ENCODE measurements at regions of chr1 and their contacts with region 1.

Region 1: DNA sequence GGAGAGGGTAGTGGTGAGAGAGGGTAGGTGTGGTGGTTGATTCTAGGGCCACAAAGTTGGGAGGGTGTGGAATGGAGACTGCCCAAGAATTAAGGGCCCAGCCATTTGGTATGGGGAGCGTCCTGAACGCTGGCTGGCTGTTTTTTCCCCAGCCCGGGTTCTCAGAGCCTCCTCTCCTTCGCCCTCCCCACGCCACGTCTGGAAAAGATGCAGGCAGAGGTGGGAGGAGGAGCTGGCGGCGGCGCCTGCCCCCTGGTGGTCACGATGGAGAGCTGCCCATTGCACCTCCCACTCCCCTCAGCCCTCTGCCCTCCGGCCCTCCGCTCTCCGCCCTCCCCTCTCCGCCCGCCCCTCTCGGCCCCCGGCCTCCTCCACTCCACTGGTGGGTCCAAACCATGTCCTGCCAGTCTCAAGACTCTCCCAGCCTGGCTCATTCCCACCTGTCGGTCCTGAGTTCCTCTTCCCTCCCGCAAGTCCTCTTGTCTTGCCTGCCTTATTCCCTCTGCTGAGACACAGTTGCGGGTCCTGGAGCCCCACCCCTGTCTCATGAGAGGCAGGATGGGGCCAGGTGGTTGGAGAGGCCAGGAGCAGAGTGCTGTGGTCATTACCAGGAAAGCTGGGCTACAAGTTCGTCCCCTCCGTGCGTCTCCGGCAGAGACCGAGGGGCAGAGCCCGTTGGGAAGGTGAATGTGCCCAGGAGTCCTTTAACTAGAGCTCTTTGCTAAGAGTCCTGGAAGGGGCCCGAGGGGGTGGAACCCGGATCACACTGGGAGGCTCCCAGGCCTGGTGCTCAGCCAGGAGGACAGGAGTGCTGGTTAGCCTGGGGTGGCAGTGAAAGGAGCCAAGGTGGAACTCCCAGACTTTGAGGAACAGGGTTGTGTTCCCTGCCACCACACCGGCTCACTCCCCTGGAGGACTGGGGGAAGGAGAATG is 22.6 kb downstream of the ETNK2 start:
- DNase-seq: no peak
- H3K4me3 ChIP-seq: no peak overlapping the region
- H3K27me3 ChIP-seq: no peaks in the 10 kb centered on the region
- CTCF ChIP-seq: peak; percentile 91

Region 2: DNA sequence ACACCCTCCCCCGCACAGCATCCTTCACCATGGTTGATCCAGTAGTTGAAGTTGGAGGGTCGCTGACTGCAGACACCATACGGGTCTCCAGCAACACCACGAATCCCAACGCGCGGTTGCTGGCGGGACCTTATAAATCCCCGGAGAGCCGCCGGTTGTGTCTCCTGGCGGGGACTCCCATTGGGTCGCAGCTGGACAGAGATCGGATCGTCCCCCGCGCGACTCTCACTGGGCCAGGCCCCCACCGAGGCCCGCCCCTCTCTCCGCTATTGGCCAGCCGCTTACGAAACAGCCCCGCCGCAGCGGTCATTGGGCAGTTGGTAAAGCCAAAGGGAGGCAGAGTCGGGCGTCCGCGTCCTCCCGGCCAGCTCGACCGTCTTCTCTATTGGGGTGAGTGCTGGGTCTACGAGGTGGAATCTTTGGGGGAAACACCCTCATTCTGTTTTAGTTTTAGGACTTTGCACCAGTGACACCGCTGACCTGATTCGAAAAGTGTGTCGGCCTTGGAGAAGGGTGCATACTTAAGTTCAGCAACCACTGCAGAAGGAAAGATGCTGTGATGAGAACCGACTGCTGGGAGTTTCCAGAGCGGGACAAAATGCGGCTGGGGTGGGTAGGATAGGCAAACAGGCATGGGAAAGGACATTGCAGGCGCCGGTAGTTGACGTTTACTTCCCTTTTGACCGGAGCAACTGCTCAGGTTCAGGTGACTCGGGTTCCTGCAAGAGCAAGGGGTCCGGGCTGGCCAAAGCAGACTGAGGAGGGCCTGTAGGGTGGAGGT is 1267.6 kb before region 1 on chr1:
- CTCF ChIA-PET with region 1: no interaction called
- POLR2A ChIA-PET with region 1: no interaction called
- DNase-seq: peak; percentile 46
- H3K4me3 ChIP-seq: peak overlapping the region; percentile 69
- H3K27me3 ChIP-seq: no peaks in the 10 kb centered on the region
- CTCF ChIP-seq: no peak

Region 3: GRCh38 chr1:203861379-203862184 is 267.6 kb before region 1 on chr1 and contains the start of gene SNRPE:
- CTCF ChIA-PET with region 1: interaction called, 456 read pairs
- POLR2A ChIA-PET with region 1: interaction called, 3 read pairs
- DNase-seq: peak; percentile 88
- H3K4me3 ChIP-seq: peak within 1 kb of the TSS; percentile 64
- H3K27me3 ChIP-seq: no peaks in the 10 kb centered on the region
- CTCF ChIP-seq: peak; percentile 97
- polyA plus RNA-seq, gene SNRPE: 128 and 147 TPM in 2 replicates

Region 4: GRCh38 chr1:204080163-204080903 is 48.9 kb before region 1 on chr1:
- CTCF ChIA-PET with region 1: interaction called, 23 read pairs
- POLR2A ChIA-PET with region 1: no interaction called
- DNase-seq: no peak
- H3K4me3 ChIP-seq: no peak overlapping the region
- H3K27me3 ChIP-seq: no peaks in the 10 kb centered on the region
- CTCF ChIP-seq: no peak

Region 5: GRCh38 chr1:204114606-204115005 is 14.6 kb before region 1 on chr1:
- CTCF ChIA-PET with region 1: interaction called, 56 read pairs
- POLR2A ChIA-PET with region 1: interaction called, 3 read pairs
- DNase-seq: no peak
- H3K4me3 ChIP-seq: no peak overlapping the region
- H3K27me3 ChIP-seq: no peaks in the 10 kb centered on the region
- CTCF ChIP-seq: no peak

Region 6: DNA sequence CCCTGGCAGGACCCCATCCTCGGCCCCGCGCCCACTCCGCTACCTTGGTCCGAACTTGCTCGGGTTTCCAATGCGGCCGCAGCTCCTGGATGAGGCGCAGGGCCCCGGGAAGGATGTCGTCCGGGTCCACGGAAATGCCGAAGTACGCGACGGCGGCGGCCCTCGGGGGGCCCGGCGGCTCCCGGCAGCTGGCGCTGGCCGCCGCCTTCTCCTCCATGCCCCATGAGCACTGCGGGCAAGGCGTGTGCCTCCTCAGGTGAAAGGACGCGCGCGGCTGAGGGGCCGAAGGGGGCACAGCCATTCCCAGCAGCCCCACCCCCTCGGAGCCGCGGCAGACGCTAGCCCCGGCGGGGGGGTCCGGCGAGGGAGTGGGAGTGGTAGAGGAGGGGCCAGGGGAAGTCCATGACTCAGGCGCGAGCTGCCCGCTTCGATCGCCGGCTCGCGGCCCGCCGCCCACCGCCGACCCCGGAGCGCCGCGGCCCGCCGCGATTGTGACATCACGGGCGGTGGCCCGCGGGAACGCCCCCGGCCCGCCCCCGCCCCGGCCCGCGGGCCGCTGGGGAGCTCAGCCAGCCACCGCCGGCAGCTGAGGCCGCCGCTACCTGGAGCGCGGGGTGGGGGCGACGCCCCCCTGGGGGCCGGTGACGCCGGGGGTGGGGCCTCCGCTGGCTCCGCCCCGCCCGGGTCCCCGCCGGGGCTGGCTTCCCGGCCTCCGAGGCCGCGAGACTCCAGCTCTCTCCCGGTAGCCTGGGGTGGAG is 22.5 kb after region 1 on chr1 and contains the start of gene ETNK2:
- CTCF ChIA-PET with region 1: interaction called, 30 read pairs
- POLR2A ChIA-PET with region 1: no interaction called
- DNase-seq: no peak
- H3K4me3 ChIP-seq: peak within 1 kb of the TSS; percentile 73
- H3K27me3 ChIP-seq: no peaks in the 10 kb centered on the region; the same call in 1 of the 2 replicates
- CTCF ChIP-seq: no peak
- polyA plus RNA-seq, gene ETNK2: 27.2 and 30.7 TPM in 2 replicates

Region 7: GRCh38 chr1:204177133-204177532 is 47.9 kb after region 1 on chr1:
- CTCF ChIA-PET with region 1: no interaction called
- POLR2A ChIA-PET with region 1: no interaction called
- DNase-seq: no peak
- H3K4me3 ChIP-seq: no peak overlapping the region
- H3K27me3 ChIP-seq: no peaks in the 10 kb centered on the region
- CTCF ChIP-seq: no peak

Measured in BJ (cell line).